Ovary (tissue), 10 donors: ENCODE measurements at regions of chr12 and their contacts with region 1.

Region 1: GRCh38 chr12:93569656-93570551 is 2.6 kb upstream of the SOCS2 start:
- DNase-seq: peak; percentile 79 to 91 (median 90)
- H3K4me3 ChIP-seq: peak overlapping the region; percentile 91
- H3K27ac ChIP-seq: peak overlapping the region; percentile 87 to 89
- H3K4me1 ChIP-seq: peaks cover 2% of the 10 kb centered on the region
- H3K27me3 ChIP-seq: no peaks in the 10 kb centered on the region
- CTCF ChIP-seq: peak; percentile 58 to 88 (median 67)
- EP300 ChIP-seq: no peak
- POLR2A ChIP-seq: no peak

Region 2: GRCh38 chr12:92987362-92987761 is 582.5 kb before region 1 on chr12:
- intact Hi-C with region 1: loop called in 1 of 4 experiments (anchors 5 kb)
- DNase-seq: peak in 1 of 5 donors; percentile 50
- H3K4me3 ChIP-seq: no peak overlapping the region
- H3K27ac ChIP-seq: peak overlapping the region in 1 of 2 donors; percentile 35
- H3K4me1 ChIP-seq: peaks cover 4% of the 10 kb centered on the region
- H3K27me3 ChIP-seq: no peaks in the 10 kb centered on the region
- CTCF ChIP-seq: peak in 2 of 3 donors; percentile 72 to 83
- EP300 ChIP-seq: no peak
- POLR2A ChIP-seq: no peak

Region 3: DNA sequence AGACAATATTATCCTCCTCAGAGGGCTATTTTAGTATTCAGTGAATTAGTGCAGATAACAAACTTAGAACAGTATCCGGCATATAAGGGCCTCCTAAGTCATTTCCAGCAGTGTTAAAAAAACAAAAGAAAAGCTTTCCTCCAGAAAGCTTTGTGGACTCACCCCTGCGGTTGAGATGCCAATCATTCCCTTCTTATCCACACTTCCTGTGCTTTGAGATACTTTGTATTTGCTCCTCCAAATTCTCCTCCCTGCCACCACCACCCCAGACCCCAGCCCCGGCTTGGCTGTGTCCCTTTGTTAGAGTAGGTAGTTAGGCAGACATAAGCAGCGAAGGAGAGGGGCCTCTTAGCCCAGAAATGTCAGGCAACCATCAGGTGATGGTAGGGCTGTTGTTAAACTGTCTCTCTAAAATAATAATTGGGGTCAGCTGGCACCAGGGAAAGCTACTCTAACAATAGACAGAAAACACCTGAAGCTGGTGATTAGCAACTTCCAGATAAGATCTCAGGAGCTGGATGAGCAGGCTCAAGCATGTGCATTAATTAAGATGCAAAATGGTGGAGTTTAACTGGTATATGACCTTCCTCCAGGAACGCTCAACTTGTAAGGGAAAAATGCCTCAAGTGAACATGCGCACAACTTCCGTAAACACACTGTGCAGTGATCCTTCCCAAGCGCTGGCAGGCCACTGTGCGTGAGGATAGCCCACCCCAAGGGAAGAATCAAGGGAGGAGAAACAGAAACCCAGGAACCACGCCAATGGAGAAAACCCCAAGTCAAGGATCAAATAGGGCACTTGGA is 488.7 kb before region 1 on chr12:
- intact Hi-C with region 1: no loop called
- DNase-seq: no peak
- H3K4me3 ChIP-seq: no peak overlapping the region
- H3K27ac ChIP-seq: no peak overlapping the region
- H3K4me1 ChIP-seq: no peaks in the 10 kb centered on the region
- H3K27me3 ChIP-seq: no peaks in the 10 kb centered on the region
- CTCF ChIP-seq: no peak
- EP300 ChIP-seq: no peak
- POLR2A ChIP-seq: no peak

Region 4: DNA sequence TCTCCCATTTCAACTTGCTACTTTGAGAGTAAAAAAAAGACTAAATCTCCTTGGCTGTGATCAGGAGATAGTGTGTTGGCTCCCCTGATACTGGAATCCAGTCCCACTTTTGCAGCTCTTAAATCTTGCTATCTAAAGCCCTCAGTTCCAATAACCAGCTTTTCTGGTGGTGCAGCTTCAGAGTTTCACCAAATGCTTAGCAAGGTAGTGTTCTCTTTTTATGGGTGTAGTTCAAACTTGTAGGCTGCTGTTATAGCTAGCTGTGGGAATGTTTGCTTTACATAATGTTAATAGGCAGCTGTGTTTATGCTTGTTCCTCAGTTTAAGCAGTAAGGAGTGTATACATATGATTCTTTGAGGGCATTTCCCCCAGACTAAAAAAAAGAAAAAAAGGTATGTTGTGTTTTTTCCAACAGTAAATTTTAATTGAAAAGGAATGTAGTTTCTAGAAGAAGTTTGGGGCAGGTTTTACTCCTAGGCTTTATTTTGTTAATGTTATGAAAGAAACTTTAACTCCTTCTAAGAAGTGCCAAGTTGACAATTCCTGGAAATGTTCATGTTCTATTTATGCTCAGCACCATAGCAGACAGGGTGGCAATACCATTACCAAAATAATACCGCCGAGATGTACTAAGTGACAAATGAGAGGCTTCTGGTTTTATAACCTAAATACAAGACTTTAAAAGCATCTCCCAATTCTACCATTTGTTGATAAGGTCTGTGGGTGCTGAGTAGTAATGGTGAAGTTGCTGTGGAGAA is 119.4 kb after region 1 on chr12:
- intact Hi-C with region 1: loop called in 1 of 4 experiments (anchors 5 kb)
- DNase-seq: no peak
- H3K4me3 ChIP-seq: no peak overlapping the region
- H3K27ac ChIP-seq: no peak overlapping the region
- H3K4me1 ChIP-seq: no peaks in the 10 kb centered on the region
- H3K27me3 ChIP-seq: no peaks in the 10 kb centered on the region
- CTCF ChIP-seq: no peak
- EP300 ChIP-seq: no peak
- POLR2A ChIP-seq: no peak

Region 5: DNA sequence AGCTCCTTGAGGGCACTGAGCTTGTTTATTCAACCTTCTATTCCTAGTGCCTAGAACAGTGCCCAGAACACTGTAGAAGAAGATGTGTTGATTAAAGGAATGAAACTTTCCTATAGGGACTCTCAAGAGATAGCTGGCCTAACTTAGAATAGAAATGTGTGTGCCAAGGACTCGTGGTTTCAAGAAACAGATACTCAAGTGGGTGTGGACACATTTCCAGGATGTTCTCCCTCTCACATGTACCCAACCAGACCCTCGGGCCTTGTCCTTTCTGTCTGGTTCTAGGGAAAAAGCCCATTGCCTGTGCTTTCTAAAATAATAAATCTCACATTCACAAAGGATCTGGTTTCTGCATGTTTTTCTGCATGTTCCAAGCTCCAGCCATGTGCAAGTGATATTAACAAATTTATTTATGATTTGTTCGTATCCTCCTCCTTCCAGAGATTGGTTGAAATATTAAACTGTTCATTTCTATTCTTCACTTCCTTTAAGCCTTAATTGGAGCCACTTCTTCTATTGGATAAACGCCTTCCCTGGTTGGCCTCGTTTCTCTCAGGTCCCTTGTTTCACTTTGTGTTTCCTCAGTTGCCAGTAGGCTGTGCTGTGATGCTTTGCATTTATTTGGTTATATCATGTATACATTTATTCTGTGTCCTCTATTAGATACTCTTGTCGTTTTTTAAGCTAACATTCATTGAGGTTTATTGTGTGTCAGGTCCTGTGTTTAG is 197.1 kb after region 1 on chr12:
- intact Hi-C with region 1: loop called in 1 of 4 experiments (anchors 5 kb)
- DNase-seq: peak in 1 of 5 donors; percentile 42
- H3K4me3 ChIP-seq: no peak overlapping the region
- H3K27ac ChIP-seq: no peak overlapping the region
- H3K4me1 ChIP-seq: peaks cover 6% of the 10 kb centered on the region
- H3K27me3 ChIP-seq: no peaks in the 10 kb centered on the region
- CTCF ChIP-seq: peak in 2 of 3 donors; percentile 51 to 54
- EP300 ChIP-seq: no peak
- POLR2A ChIP-seq: no peak

Region 6: GRCh38 chr12:94101738-94102660 is 532.1 kb after region 1 on chr12:
- intact Hi-C with region 1: loop called (anchors 1 to 5 kb)
- DNase-seq: peak; percentile 76 to 88 (median 86)
- H3K4me3 ChIP-seq: peak overlapping the region; percentile 63
- H3K27ac ChIP-seq: no peak overlapping the region
- H3K4me1 ChIP-seq: no peaks in the 10 kb centered on the region
- H3K27me3 ChIP-seq: no peaks in the 10 kb centered on the region
- CTCF ChIP-seq: peak; percentile 69 to 79 (median 69)
- EP300 ChIP-seq: no peak
- POLR2A ChIP-seq: no peak